ENCODE measurements at regions of chr12 and their contacts with region 1.

Region 1: DNA sequence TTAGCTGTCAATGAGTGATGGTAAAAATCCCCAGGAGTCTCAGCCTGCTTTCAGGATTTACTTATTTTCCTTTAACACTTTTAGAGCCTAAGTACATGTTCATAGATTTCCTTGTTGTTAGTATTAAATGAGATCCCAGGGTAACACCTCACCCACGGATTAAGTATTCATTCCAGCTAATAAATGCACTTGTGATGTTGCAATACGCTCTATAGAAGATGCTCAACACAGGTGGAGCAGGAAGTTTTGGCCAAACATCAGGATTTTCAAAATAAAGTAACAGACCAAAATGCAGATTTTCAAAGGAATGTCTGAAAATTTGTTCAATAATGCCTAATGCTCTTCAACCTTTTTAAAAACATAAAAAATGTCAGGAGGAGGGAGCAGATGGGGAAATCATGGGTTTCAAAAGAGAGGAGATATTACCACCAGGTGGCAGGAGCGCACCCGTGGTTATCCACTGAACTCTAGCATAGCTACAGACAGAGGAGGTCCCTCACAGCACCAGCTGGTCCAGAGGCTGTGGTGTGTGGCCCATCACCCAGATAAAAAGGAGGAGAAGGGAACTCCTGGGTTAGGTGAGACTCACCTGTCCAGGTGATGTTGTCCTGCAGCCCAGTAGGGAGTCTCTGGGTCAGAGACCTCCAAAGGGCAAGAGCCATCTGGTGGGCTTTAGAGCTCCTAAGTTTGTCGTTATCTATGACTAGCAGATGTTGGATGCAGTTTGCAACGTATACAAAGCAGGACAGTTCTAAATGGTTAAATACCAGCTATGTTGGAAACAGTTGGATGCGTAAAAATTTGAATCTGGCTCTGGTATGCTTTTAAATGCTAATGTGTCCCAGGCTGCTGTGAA is 1158.4 kb upstream of the TMEM132C start:
- DNase-seq: no peak
- ATAC-seq: peak; percentile 91
- H3K4me3 ChIP-seq: no peak overlapping the region
- H3K27ac ChIP-seq: no peak overlapping the region
- H3K4me1 ChIP-seq: no peaks in the 10 kb centered on the region
- H3K27me3 ChIP-seq: no peaks in the 10 kb centered on the region
- CTCF ChIP-seq: peak; percentile 33 to 56 (median 47); a peak in 5 of 6 replicates
- EP300 ChIP-seq: no peak
- POLR2A ChIP-seq: no peak
- RAD21 ChIP-seq: peak; percentile 52

Region 2: GRCh38 chr12:127008755-127009403 is 99.7 kb before region 1 on chr12:
- CTCF ChIA-PET with region 1: no interaction called
- POLR2A ChIA-PET with region 1: no interaction called
- RAD21 ChIA-PET with region 1: no interaction called
- SMC1A ChIA-PET with region 1: no interaction called
- in situ Hi-C with region 1: no loop called
- intact Hi-C with region 1: no loop called
- DNase-seq: no peak
- ATAC-seq: no peak
- H3K4me3 ChIP-seq: no peak overlapping the region
- H3K27ac ChIP-seq: no peak overlapping the region
- H3K4me1 ChIP-seq: no peaks in the 10 kb centered on the region
- H3K27me3 ChIP-seq: no peaks in the 10 kb centered on the region
- CTCF ChIP-seq: no peak
- EP300 ChIP-seq: no peak
- POLR2A ChIP-seq: no peak
- RAD21 ChIP-seq: no peak

Region 3: GRCh38 chr12:127119600-127120140 is 11.1 kb after region 1 on chr12:
- CTCF ChIA-PET with region 1: interaction called, 23 read pairs
- POLR2A ChIA-PET with region 1: no interaction called
- RAD21 ChIA-PET with region 1: interaction called, 3 read pairs
- SMC1A ChIA-PET with region 1: interaction called, 5 read pairs
- in situ Hi-C with region 1: no loop called
- intact Hi-C with region 1: no loop called
- DNase-seq: no peak
- ATAC-seq: no peak
- H3K4me3 ChIP-seq: no peak overlapping the region
- H3K27ac ChIP-seq: no peak overlapping the region
- H3K4me1 ChIP-seq: no peaks in the 10 kb centered on the region
- H3K27me3 ChIP-seq: no peaks in the 10 kb centered on the region
- CTCF ChIP-seq: no peak
- EP300 ChIP-seq: no peak
- POLR2A ChIP-seq: no peak
- RAD21 ChIP-seq: no peak

Region 4: DNA sequence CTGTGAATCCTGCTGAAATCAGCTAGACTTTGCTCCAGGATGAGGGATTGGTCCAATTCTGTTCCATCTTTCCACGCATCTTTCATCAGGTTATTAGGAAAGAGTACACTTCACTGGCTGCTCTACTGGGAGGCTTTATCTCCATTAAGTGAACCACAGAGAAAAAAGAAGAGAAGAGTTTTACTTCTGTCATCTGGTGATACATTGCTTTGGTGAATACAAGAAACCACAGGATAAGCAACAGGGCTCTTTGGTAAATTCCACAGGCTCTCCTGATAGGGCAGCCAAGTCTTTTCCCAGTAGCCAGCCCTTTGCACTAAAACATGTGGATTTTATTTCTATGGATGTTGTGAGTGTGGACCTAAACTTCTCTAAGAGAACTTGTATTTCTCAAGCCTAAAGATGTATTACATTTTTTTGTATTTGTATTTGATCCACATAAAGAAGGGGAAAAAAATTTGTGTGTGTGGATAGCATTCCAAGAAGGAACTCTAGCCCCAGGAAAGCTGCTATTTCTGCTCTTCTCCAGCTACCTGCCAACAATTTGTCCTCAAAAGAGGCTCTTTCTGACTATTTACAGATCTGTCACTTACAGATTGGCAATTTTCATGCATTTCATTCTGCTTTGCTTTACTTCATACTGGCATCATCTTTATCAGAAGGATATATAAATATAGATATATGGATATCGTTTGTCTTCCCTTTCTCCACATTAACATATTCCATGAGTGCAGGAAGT is 40.8 kb after region 1 on chr12:
- CTCF ChIA-PET with region 1: interaction called, 10 read pairs
- POLR2A ChIA-PET with region 1: no interaction called
- RAD21 ChIA-PET with region 1: no interaction called
- SMC1A ChIA-PET with region 1: interaction called, 4 read pairs
- in situ Hi-C with region 1: no loop called
- intact Hi-C with region 1: no loop called
- DNase-seq: no peak
- ATAC-seq: no peak
- H3K4me3 ChIP-seq: no peak overlapping the region
- H3K27ac ChIP-seq: peak overlapping the region; percentile 55
- H3K4me1 ChIP-seq: no peaks in the 10 kb centered on the region; the same call in 1 of the 2 replicates
- H3K27me3 ChIP-seq: no peaks in the 10 kb centered on the region
- CTCF ChIP-seq: no peak
- EP300 ChIP-seq: no peak
- POLR2A ChIP-seq: no peak
- RAD21 ChIP-seq: no peak

Region 5: GRCh38 chr12:127241072-127241817 is 132.7 kb after region 1 on chr12:
- CTCF ChIA-PET with region 1: no interaction called
- POLR2A ChIA-PET with region 1: no interaction called
- RAD21 ChIA-PET with region 1: no interaction called
- SMC1A ChIA-PET with region 1: no interaction called
- in situ Hi-C with region 1: no loop called
- intact Hi-C with region 1: no loop called
- DNase-seq: no peak
- ATAC-seq: no peak
- H3K4me3 ChIP-seq: no peak overlapping the region
- H3K27ac ChIP-seq: no peak overlapping the region
- H3K4me1 ChIP-seq: no peaks in the 10 kb centered on the region
- H3K27me3 ChIP-seq: no peaks in the 10 kb centered on the region
- CTCF ChIP-seq: no peak
- EP300 ChIP-seq: no peak
- POLR2A ChIP-seq: no peak
- RAD21 ChIP-seq: no peak

Region 6: GRCh38 chr12:127293507-127294310 is 185.1 kb after region 1 on chr12:
- CTCF ChIA-PET with region 1: interaction called, 25 read pairs
- POLR2A ChIA-PET with region 1: no interaction called
- RAD21 ChIA-PET with region 1: interaction called, 11 read pairs
- SMC1A ChIA-PET with region 1: interaction called, 17 read pairs
- in situ Hi-C with region 1: no loop called
- intact Hi-C with region 1: loop called (anchors 1 kb)
- DNase-seq: no peak
- ATAC-seq: peak; percentile 76
- H3K4me3 ChIP-seq: no peak overlapping the region
- H3K27ac ChIP-seq: no peak overlapping the region
- H3K4me1 ChIP-seq: no peaks in the 10 kb centered on the region
- H3K27me3 ChIP-seq: no peaks in the 10 kb centered on the region
- CTCF ChIP-seq: peak; percentile 45 to 49 (median 46); a peak in 5 of 6 replicates
- EP300 ChIP-seq: no peak
- POLR2A ChIP-seq: no peak
- RAD21 ChIP-seq: peak; percentile 65

Region 7: DNA sequence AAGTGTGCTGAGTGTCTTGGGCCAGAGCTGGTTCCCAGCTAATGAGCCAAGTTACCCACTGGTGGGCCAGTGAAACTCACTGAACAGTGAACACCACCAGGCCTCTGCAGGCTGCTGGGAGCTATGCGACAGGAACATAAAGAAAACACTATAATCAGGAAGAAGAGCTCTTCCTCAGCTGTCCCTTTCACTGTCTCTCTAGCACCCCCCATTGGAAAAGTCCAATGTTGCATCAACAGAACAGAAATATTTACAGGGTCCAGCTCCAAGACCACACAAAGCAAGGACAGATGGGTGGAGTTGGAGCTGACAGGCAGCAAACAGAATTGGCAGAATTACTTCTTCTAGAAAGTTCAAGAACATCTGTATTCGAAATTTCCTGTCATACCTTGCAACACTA is 254.8 kb after region 1 on chr12:
- CTCF ChIA-PET with region 1: interaction called, 21 read pairs
- POLR2A ChIA-PET with region 1: no interaction called
- RAD21 ChIA-PET with region 1: interaction called, 12 read pairs
- SMC1A ChIA-PET with region 1: interaction called, 6 read pairs
- in situ Hi-C with region 1: no loop called
- intact Hi-C with region 1: no loop called
- DNase-seq: no peak
- ATAC-seq: no peak
- H3K4me3 ChIP-seq: no peak overlapping the region
- H3K27ac ChIP-seq: no peak overlapping the region
- H3K4me1 ChIP-seq: no peaks in the 10 kb centered on the region
- H3K27me3 ChIP-seq: no peaks in the 10 kb centered on the region
- CTCF ChIP-seq: 0 out of 6 replicates have a peak, but pooled peaks of 1 of the 3 experiments have one; percentile 5
- EP300 ChIP-seq: no peak
- POLR2A ChIP-seq: no peak
- RAD21 ChIP-seq: no peak

Region 8: GRCh38 chr12:127381048-127381668 is 272.6 kb after region 1 on chr12:
- CTCF ChIA-PET with region 1: interaction called, 26 read pairs
- POLR2A ChIA-PET with region 1: no interaction called
- RAD21 ChIA-PET with region 1: interaction called, 9 read pairs
- SMC1A ChIA-PET with region 1: interaction called, 3 read pairs
- in situ Hi-C with region 1: no loop called
- intact Hi-C with region 1: loop called (anchors 2 kb)
- DNase-seq: no peak
- ATAC-seq: peak; percentile 87
- H3K4me3 ChIP-seq: no peak overlapping the region
- H3K27ac ChIP-seq: no peak overlapping the region
- H3K4me1 ChIP-seq: no peaks in the 10 kb centered on the region
- H3K27me3 ChIP-seq: no peaks in the 10 kb centered on the region
- CTCF ChIP-seq: peak; percentile 57 to 81 (median 70)
- EP300 ChIP-seq: no peak
- POLR2A ChIP-seq: no peak
- RAD21 ChIP-seq: peak; percentile 74

Region 9: GRCh38 chr12:127677537-127678131 is 569.0 kb after region 1 on chr12:
- CTCF ChIA-PET with region 1: interaction called, 16 read pairs
- POLR2A ChIA-PET with region 1: no interaction called
- RAD21 ChIA-PET with region 1: interaction called, 15 read pairs
- SMC1A ChIA-PET with region 1: interaction called, 9 read pairs
- in situ Hi-C with region 1: no loop called
- intact Hi-C with region 1: no loop called
- DNase-seq: no peak
- ATAC-seq: peak; percentile 68
- H3K4me3 ChIP-seq: no peak overlapping the region
- H3K27ac ChIP-seq: no peak overlapping the region
- H3K4me1 ChIP-seq: no peaks in the 10 kb centered on the region
- H3K27me3 ChIP-seq: no peaks in the 10 kb centered on the region
- CTCF ChIP-seq: peak; percentile 55 to 60 (median 57)
- EP300 ChIP-seq: no peak
- POLR2A ChIP-seq: no peak
- RAD21 ChIP-seq: peak; percentile 62

Measured in GM12878 (cell line).